ENCODE measurements at regions of chr22 and their contacts with region 1.

Region 1: DNA sequence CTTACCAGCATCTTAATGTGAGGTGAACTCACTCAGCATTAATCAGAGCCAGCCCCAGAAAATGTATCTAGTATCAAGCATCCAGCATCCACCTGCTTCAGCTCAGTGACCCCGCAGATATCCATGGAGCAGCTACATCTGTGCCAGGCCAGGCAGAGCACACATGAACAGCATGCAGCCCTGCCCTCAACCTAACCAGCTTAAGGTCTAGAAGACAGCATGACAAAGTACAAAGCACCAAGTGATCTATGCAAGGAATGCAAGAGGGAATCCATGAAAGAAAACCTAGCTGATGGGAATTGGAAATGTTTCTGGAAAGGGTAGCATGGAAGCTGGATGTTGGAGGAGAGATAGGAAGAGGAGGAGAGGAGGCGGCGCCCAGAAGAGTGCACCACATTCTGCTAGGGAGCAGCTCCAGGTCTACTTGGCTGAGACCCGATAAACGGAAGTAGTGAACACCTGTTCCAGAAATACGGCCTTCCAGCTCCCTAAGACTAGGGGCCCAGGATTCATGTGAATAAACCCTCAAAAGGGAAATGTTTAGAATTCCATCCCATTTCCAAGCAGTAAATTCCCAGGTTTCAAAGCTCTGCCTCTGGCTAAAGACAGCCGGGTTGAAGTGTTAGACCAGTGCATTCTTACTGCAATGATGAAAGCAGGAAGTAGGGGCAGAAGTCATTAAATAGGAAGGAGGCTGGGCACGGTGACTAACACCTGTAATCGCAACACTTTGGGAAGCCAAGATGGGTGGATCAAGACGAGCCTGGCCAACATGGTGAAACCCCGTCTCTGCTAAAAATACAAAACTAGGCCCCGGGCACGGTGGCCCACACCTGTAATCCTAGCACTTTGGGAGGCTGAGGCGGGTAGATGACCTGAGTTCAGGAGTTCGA is 23.5 kb upstream of the L3MBTL2 start:
- DNase-seq: no peak
- ATAC-seq: no peak
- H3K4me3 ChIP-seq: no peak overlapping the region
- H3K4me3 Mint-ChIP-seq: no peak overlapping the region
- H3K27ac ChIP-seq: no peak overlapping the region
- H3K27ac Mint-ChIP-seq: peak overlapping the region in 1 of 2 donors; percentile 65
- H3K4me1 ChIP-seq: no peaks in the 10 kb centered on the region
- H3K4me1 Mint-ChIP-seq: peaks cover 2 to 5% (median 3%) of the 10 kb centered on the region in 3 donors
- H3K27me3 ChIP-seq: no peaks in the 10 kb centered on the region
- H3K27me3 Mint-ChIP-seq: no peaks in the 10 kb centered on the region

Region 2: DNA sequence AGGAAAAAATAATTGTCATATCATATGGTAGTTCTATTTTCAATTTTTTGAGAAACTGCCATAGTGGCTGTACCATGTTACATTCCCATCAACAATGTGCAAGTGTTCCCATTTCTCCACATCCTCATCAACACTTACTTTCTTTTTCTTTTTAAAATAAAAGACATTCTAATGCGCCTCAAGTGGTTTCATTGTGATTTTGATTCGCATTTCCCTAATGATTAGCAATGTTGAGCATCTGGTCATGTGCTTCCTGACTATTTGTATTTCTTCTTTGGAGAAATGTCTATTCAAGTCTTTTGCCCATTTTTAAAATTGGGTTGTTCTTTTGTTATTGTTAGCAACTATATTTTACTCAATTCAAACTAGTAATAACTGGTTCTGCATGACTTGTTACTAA is 493.9 kb before region 1 on chr22:
- CTCF ChIA-PET with region 1: no interaction called
- POLR2A ChIA-PET with region 1: interaction called, 6 to 10 read pairs
- DNase-seq: no peak
- ATAC-seq: no peak
- H3K4me3 ChIP-seq: no peak overlapping the region
- H3K4me3 Mint-ChIP-seq: no peak overlapping the region
- H3K27ac ChIP-seq: no peak overlapping the region
- H3K27ac Mint-ChIP-seq: no peak overlapping the region
- H3K4me1 ChIP-seq: peaks cover 0 to 7% of the 10 kb centered on the region in 2 experiments
- H3K4me1 Mint-ChIP-seq: peaks cover 12 to 20% (median 17%) of the 10 kb centered on the region in 3 donors
- H3K27me3 ChIP-seq: peaks cover 0 to 2% of the 10 kb centered on the region in 2 experiments
- H3K27me3 Mint-ChIP-seq: no peaks in the 10 kb centered on the region